GM10248 (cell line): ENCODE measurements at regions of chr6 and their contacts with region 1.

Region 1: GRCh38 chr6:37566111-37566949 is 66.6 kb upstream of the CCDC167 start:
- DNase-seq: peak; percentile 89
- CTCF ChIP-seq: peak; percentile 97

Region 2: GRCh38 chr6:37324131-37325033 is 241.9 kb before region 1 on chr6:
- CTCF ChIA-PET with region 1: interaction called, 11 read pairs
- POLR2A ChIA-PET with region 1: no interaction called
- DNase-seq: no peak
- CTCF ChIP-seq: no peak

Region 3: GRCh38 chr6:37347670-37348111 is 218.6 kb before region 1 on chr6:
- CTCF ChIA-PET with region 1: no interaction called
- POLR2A ChIA-PET with region 1: no interaction called
- DNase-seq: no peak
- CTCF ChIP-seq: no peak

Region 4: GRCh38 chr6:37381579-37381978 is 184.8 kb before region 1 on chr6:
- CTCF ChIA-PET with region 1: interaction called, 13 read pairs
- POLR2A ChIA-PET with region 1: no interaction called
- DNase-seq: peak; percentile 71
- CTCF ChIP-seq: peak; percentile 51

Region 5: DNA sequence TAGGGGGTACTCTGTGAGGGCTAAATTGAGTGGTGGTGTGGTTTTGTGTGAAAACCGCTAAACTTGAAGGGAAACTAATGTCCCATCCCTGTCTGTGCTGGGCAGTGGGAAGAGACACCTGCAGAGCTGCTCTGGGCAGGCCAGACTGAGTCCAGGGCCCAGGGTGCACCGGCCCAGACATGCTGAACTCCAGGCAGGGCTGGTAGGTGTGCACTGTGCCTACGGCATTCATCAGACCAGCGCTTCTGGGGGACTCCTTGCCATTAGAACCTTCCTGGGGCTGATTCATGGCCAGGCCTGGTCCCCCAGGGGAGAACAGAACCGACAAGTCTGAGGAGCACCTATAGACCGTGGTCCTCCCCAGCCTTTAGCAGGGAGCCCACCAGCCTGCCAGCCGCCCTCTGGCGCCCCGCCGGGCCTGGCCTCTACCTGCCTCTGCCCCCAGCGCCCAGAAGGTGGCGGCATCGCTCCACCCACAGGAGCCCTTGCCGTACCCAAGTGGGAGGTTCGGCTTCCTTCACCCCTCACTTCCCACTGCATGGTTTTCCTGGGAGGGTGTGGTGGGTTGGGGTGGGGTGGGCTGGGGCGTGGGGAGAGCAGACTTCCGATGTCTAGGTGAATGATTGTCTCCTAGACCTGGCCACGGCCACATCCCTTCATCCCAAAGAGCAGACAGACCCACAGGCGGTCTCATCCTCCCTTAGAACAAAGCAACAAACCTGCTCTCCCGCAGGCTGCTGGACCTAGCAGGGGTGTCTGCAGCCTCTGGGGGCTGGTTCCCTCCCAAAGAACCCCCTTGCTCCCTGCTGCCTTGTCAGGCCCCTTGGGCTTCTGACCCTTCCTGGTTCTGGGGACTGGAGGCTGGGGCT is 82.2 kb before region 1 on chr6:
- CTCF ChIA-PET with region 1: interaction called, 19 read pairs
- POLR2A ChIA-PET with region 1: no interaction called
- DNase-seq: peak; percentile 88
- CTCF ChIP-seq: peak; percentile 93

Region 6: DNA sequence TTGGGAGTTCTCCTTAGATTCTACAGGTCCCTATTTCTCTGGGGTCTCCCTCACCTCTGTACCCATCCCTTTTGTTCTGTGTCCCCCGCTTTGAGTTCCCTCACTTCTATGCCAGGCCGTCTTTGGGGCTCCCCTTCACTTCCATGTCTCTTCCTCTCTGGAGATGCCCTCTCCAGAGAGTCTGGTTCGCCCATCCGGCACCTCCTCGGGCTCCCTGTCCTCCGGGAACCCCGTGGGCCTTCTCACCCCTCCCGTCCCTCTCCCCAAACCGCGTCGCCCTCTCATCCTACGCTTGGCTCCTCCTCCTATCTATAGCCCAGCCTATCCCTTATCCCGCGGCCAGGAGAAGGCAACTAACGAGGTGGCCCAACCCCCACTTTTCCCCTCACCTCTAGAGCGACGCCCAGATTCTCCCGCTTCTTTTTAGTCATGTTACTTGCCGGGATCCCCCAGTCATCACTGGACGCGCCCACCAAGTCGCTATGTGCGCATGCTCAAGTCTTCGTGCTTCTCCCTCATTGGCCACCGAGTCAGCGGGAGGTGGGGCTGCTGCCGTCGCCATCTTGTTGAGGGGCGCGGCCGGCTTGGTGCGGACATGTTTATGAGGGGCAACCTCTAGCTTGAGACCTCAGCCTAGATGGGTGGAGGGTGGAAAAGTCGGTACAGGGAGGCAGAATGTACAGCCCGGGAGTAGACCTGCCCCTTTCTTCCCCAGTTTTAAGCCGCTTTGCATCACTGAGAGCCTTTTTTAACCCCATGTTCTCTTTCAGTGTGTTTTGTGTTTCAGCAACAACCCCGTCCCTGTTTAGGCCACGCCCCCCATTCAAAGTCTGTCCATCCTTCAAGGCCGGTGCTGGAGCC is 66.7 kb before region 1 on chr6 and contains the start of gene CCDC167:
- CTCF ChIA-PET with region 1: interaction called, 34 read pairs
- POLR2A ChIA-PET with region 1: no interaction called
- DNase-seq: peak; percentile 95
- CTCF ChIP-seq: no peak

Region 7: GRCh38 chr6:37547564-37548061 is 18.7 kb before region 1 on chr6:
- CTCF ChIA-PET with region 1: interaction called, 263 read pairs
- POLR2A ChIA-PET with region 1: interaction called, 3 read pairs
- DNase-seq: no peak
- CTCF ChIP-seq: no peak

Region 8: GRCh38 chr6:37691904-37692806 is 125.8 kb after region 1 on chr6:
- CTCF ChIA-PET with region 1: interaction called, 12 read pairs
- POLR2A ChIA-PET with region 1: no interaction called
- DNase-seq: peak; percentile 85
- CTCF ChIP-seq: peak; percentile 100

Region 9: GRCh38 chr6:37725957-37726356 is 159.6 kb after region 1 on chr6:
- CTCF ChIA-PET with region 1: no interaction called
- POLR2A ChIA-PET with region 1: no interaction called
- DNase-seq: no peak
- CTCF ChIP-seq: no peak

Region 10: GRCh38 chr6:37741757-37742400 is 175.5 kb after region 1 on chr6:
- CTCF ChIA-PET with region 1: no interaction called
- POLR2A ChIA-PET with region 1: no interaction called
- DNase-seq: no peak
- CTCF ChIP-seq: peak; percentile 30